Activated B cell treated with CpG ODN at 0.5 μM for 24 hours (primary cell): ENCODE measurements at regions of chr12 and their contacts with region 1.

Region 1: GRCh38 chr12:100234598-100235304 is 32.1 kb downstream of the DEPDC4 start:
- DNase-seq: no peak
- ATAC-seq: no peak
- H3K4me3 Mint-ChIP-seq: no peak overlapping the region
- H3K27ac Mint-ChIP-seq: no peak overlapping the region
- H3K4me1 Mint-ChIP-seq: no peaks in the 10 kb centered on the region
- H3K27me3 Mint-ChIP-seq: no peaks in the 10 kb centered on the region
- CTCF ChIP-seq: no peak

Region 2: DNA sequence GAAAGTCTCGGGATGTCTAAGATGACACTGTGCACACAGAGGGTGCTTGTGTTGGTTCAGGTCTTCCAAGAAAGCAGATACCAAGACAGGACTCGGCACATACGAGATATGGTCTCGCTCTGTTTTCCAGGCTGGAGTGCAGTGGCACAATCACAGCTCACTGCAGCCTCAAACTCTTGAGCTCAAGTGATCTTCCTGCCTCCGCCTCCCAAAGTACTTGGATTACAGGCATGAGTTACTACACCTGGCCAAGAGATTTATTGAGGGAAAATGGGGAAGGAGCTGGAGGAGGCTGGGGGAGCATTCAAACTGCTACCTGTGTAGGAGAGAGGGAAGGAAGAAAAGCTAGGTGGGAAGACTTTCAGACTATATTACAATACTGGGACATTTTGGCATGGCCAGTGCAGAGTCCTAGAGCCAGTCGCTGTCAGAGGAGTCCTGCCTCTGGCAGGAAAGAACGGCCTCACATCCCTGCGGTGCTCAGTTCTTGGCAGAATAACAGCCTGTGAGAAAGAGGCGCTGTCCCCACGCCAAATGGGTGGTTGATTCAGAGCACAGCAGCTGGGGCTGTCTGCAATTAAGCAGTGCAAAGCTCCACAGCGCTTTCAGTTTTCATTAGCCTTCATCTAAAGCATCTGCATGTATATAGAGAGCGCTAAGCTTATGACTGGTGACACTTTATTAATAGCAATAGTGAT is 140.4 kb after region 1 on chr12:
- CTCF ChIA-PET with region 1: no interaction called
- POLR2A ChIA-PET with region 1: no interaction called
- intact Hi-C with region 1: no loop called
- DNase-seq: no peak
- ATAC-seq: no peak
- H3K4me3 Mint-ChIP-seq: no peak overlapping the region
- H3K27ac Mint-ChIP-seq: no peak overlapping the region
- H3K4me1 Mint-ChIP-seq: no peaks in the 10 kb centered on the region
- H3K27me3 Mint-ChIP-seq: peaks cover 12% of the 10 kb centered on the region
- CTCF ChIP-seq: no peak

Region 3: DNA sequence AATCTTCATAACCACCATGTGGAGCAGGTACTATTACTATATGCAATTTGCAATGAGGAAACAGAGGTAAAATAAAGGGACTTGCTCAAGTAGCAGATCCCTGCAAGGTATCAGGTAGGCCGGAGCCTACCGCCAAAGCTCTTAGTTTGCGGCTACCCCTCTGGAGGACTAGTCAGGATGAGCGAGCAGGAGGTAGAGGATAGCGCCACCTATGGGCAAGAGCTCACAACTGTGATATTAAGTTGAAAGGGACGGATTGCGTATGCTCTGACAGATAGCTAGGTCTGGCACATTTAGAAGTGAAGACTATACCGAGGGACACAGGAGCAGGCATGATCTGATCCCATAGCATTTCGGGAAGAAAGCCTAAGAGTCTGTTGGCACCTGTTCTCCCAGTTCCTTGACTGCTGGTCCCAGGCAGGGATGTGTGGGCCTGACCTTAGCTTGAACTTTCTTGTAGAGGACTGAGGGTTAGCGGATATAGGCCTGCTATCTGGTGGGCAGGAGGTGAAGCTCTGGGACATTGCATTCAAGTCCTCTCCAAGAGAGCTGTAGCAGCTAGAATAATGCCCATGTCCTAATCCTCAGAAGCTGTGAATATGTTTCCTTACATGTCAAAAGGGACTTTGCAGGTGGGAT is 170.1 kb after region 1 on chr12:
- CTCF ChIA-PET with region 1: interaction called, 3 read pairs
- POLR2A ChIA-PET with region 1: no interaction called
- intact Hi-C with region 1: loop called (anchors 5 kb)
- DNase-seq: no peak
- ATAC-seq: no peak
- H3K4me3 Mint-ChIP-seq: no peak overlapping the region
- H3K27ac Mint-ChIP-seq: no peak overlapping the region
- H3K4me1 Mint-ChIP-seq: no peaks in the 10 kb centered on the region
- H3K27me3 Mint-ChIP-seq: no peaks in the 10 kb centered on the region
- CTCF ChIP-seq: no peak

Region 4: GRCh38 chr12:100473716-100474150 is 239.0 kb after region 1 on chr12 and contains the start of gene NR1H4:
- CTCF ChIA-PET with region 1: no interaction called
- POLR2A ChIA-PET with region 1: no interaction called
- intact Hi-C with region 1: no loop called
- DNase-seq: no peak
- ATAC-seq: no peak
- H3K4me3 Mint-ChIP-seq: no peak within 1 kb of the TSS
- H3K27ac Mint-ChIP-seq: no peak within 1 kb of the TSS
- H3K4me1 Mint-ChIP-seq: no peaks in the 10 kb centered on the region
- H3K27me3 Mint-ChIP-seq: peaks cover 7% of the 10 kb centered on the region
- CTCF ChIP-seq: no peak
- total RNA-seq, gene NR1H4: not detected in 2 replicates

Region 5: DNA sequence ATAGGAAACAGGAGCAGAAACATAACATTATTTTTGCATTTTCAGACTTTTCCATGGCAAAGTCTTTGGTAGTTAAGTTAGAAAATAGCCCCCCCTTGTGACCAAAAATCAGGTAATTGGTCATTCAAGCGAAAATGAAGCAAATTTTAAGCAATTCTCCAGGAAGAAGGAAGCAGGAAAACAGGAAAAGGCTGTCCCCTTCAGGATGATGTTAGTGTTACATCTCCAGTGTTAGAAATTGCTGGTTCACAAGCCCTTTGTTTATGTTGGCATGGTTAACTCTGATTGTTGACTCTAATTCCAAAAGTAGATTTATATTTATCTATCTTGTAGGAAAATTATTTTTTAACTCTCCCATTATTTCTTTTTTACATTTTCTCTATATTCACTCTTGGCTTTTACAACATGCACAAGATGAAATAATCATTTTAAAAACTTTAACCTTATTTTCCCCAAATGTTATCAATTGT is 319.9 kb after region 1 on chr12:
- CTCF ChIA-PET with region 1: interaction called, 16 read pairs
- POLR2A ChIA-PET with region 1: no interaction called
- intact Hi-C with region 1: no loop called
- DNase-seq: no peak
- ATAC-seq: no peak
- H3K4me3 Mint-ChIP-seq: no peak overlapping the region
- H3K27ac Mint-ChIP-seq: no peak overlapping the region
- H3K4me1 Mint-ChIP-seq: no peaks in the 10 kb centered on the region
- H3K27me3 Mint-ChIP-seq: peaks cover 2% of the 10 kb centered on the region
- CTCF ChIP-seq: no peak

Region 6: GRCh38 chr12:100668945-100669536 is 434.3 kb after region 1 on chr12:
- CTCF ChIA-PET with region 1: interaction called, 6 read pairs
- POLR2A ChIA-PET with region 1: interaction called, 4 read pairs
- intact Hi-C with region 1: loop called (anchors 1 kb)
- DNase-seq: peak; percentile 30
- ATAC-seq: no peak
- H3K4me3 Mint-ChIP-seq: no peak overlapping the region
- H3K27ac Mint-ChIP-seq: no peak overlapping the region
- H3K4me1 Mint-ChIP-seq: no peaks in the 10 kb centered on the region
- H3K27me3 Mint-ChIP-seq: no peaks in the 10 kb centered on the region
- CTCF ChIP-seq: no peak

Region 7: DNA sequence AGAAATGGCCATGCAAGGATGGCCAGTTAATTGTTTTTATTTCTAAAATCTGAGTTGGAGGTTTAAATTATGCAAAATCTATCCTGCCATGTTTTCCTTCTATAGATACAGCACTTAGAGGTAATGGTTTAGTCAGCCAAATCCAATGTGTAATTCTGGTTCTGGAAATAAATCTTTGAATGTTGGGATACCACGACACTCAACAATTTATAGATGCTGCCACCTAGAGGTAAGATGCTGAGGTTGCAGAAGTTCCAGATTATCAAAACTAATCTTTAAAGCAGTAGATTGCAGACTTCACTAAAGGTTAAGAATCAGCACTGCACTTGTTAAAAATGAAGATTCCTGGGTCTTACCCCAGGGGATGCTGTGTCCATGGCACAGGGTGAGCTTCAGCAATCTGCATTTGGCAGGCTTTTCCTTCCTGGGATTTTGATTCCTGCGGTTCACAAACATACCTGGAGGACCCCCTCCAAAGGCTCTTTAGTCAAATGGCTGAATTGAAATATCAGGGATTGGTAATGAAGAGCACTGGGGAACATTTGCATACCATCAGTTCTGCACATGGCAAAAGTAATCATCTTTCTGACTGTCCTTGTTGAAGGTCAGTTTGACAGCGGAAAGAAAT is 506.4 kb after region 1 on chr12:
- CTCF ChIA-PET with region 1: no interaction called
- POLR2A ChIA-PET with region 1: no interaction called
- intact Hi-C with region 1: loop called (anchors 1 kb)
- DNase-seq: no peak
- ATAC-seq: no peak
- H3K4me3 Mint-ChIP-seq: no peak overlapping the region
- H3K27ac Mint-ChIP-seq: no peak overlapping the region
- H3K4me1 Mint-ChIP-seq: no peaks in the 10 kb centered on the region
- H3K27me3 Mint-ChIP-seq: peaks cover 3% of the 10 kb centered on the region
- CTCF ChIP-seq: no peak

Region 8: DNA sequence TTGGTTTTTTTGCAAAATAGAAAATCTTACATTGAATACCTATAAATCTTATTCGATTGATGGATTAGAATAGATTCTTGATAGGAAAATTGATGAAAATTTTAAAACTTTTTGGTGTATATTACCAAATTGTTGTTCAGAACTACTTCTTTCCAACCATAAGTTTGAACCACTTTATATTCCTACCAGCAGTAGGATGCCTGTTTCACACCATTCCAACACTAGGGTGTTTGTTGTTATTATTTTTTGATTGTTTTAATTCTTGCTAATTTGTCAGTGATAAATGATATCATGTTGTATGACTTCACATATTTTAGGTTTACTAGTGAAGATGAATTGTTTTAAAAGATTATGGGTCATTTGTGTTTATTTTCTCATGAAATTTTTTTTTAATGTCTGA is 1088.5 kb after region 1 on chr12:
- CTCF ChIA-PET with region 1: no interaction called
- POLR2A ChIA-PET with region 1: no interaction called
- intact Hi-C with region 1: loop called (anchors 2 kb)
- DNase-seq: no peak
- ATAC-seq: no peak
- H3K4me3 Mint-ChIP-seq: no peak overlapping the region
- H3K27ac Mint-ChIP-seq: no peak overlapping the region
- H3K4me1 Mint-ChIP-seq: no peaks in the 10 kb centered on the region
- H3K27me3 Mint-ChIP-seq: no peaks in the 10 kb centered on the region
- CTCF ChIP-seq: no peak

Region 9: DNA sequence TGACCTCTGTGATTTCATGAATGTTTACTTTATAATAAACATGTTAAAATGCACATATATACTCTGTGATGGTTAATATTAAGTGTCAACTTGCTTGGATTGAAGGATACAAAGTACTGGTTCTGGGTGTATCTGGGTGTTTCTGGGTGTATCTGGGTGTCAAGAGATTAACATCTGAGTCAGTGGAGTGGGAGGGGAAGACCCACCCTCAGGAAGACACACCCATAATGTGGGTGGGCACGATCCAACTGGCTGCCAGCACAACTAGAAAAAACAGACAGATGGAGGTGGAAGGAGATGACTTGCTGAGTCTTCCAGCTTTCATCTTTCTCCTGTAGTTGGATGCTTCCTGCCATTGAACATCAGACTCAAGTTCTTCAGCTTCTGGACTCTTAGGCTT is 1873.2 kb after region 1 on chr12:
- CTCF ChIA-PET with region 1: no interaction called
- POLR2A ChIA-PET with region 1: no interaction called
- intact Hi-C with region 1: no loop called
- DNase-seq: no peak
- ATAC-seq: no peak
- H3K4me3 Mint-ChIP-seq: no peak overlapping the region
- H3K27ac Mint-ChIP-seq: no peak overlapping the region
- H3K4me1 Mint-ChIP-seq: peaks cover 5% of the 10 kb centered on the region
- H3K27me3 Mint-ChIP-seq: no peaks in the 10 kb centered on the region
- CTCF ChIP-seq: no peak